ENCODE measurements at regions of chr3 and their contacts with region 1.

Region 1: GRCh38 chr3:102129760-102130608 is 280.7 kb downstream of the NFKBIZ start:
- DNase-seq: peak; percentile 90
- H3K4me3 ChIP-seq: no peak overlapping the region
- H3K27ac ChIP-seq: peak overlapping the region; percentile 81 to 92 (median 84)
- H3K4me1 ChIP-seq: peaks cover 0 to 33% (median 23%) of the 10 kb centered on the region in 4 donors
- H3K27me3 ChIP-seq: no peaks in the 10 kb centered on the region
- CTCF ChIP-seq: no peak
- EP300 ChIP-seq: peak; percentile 97 to 99 (median 98)
- POLR2A ChIP-seq: no peak

Region 2: GRCh38 chr3:101501783-101502182 is 628.2 kb before region 1 on chr3:
- intact Hi-C with region 1: no loop called
- DNase-seq: no peak
- H3K4me3 ChIP-seq: no peak overlapping the region
- H3K27ac ChIP-seq: no peak overlapping the region
- H3K4me1 ChIP-seq: peaks cover 0 to 8% (median 0%) of the 10 kb centered on the region in 4 donors
- H3K27me3 ChIP-seq: no peaks in the 10 kb centered on the region
- CTCF ChIP-seq: no peak
- EP300 ChIP-seq: no peak
- POLR2A ChIP-seq: no peak

Region 3: DNA sequence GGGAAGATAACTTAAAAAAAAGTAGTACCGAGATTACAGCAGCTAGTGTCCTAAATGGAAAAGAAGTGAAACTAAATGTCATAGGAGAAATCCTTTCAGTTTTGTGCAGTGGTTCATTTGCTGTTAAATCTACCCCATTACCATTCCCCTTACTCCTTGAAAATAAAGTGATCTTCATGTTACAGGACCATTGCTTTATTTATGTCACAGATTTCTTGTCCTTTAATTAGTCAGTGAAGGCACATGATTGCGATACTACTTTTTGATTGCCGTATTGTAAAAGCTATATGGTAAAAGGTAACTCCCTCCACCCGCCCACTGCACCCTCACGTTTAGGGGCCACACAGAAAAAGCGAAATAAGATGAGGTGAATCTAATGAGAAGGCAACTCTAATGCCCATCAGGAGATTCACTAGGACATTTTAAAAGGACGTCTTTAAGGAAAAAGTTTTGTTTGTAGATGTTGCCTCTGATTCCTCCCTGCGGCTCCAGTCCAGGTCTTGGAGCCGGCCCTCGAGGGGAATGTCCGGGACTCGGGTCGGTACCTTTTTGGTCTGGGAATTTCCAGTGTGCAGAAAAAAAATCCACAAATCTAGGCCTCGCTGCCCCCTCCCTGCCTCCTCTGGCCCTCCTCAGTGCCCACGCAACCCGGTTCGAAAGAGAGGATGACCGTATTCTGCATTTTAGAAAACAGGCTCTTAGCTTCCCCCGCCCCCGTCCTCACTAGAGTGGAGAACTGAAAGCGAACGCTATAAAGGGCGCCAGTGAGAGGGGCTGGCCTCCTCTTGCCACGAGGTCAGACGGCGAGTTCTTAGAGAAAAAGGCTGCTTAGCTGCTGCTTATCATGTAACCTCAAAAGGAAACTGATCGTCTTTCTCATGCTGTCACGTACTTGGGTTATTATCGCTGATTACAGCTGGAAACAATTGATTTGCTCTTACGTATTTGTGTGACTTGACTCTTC is 302.5 kb before region 1 on chr3:
- intact Hi-C with region 1: loop called (anchors 5 kb)
- DNase-seq: peak; percentile 90
- H3K4me3 ChIP-seq: peak overlapping the region; percentile 44 to 63 (median 58)
- H3K27ac ChIP-seq: peak overlapping the region; percentile 85 to 93 (median 92)
- H3K4me1 ChIP-seq: peaks cover 0 to 39% (median 34%) of the 10 kb centered on the region in 4 donors
- H3K27me3 ChIP-seq: no peaks in the 10 kb centered on the region
- CTCF ChIP-seq: no peak
- EP300 ChIP-seq: no peak
- POLR2A ChIP-seq: peak; percentile 48 to 49

Region 4: DNA sequence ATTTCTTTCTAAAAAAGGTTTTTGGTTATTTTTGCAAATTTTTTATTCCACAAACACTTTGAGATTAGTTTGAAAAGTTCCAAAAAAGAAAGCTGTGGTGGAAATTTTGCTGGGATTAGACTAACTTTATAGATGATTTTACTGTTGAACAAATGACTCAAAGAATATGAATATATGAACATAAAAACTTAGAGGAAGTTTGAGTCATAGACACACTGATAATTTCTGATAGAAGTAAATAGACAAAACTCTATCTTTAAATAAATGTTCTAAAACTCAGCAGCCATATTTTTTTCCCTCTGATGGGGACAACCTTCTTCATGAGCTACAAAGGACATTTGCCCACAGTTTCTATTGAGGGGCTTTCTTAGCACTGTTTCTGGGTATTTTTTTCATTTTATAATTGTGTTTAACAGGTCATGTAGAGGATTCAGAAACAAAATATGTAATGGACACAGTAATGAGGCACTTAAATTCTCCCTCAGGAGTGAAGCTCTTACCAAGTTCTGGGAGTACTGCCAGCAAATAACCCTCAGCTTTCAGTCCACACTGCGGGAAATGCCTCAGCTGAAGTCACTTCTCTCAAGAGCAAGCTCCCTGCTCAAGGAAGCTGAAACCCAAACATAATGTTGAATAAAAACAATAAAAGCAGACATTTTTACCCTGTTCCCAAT is 123.0 kb before region 1 on chr3:
- intact Hi-C with region 1: loop called (anchors 10 kb)
- DNase-seq: peak; percentile 74
- H3K4me3 ChIP-seq: no peak overlapping the region
- H3K27ac ChIP-seq: peak overlapping the region in 2 of 4 donors; percentile 28 to 56
- H3K4me1 ChIP-seq: peaks cover 0 to 10% (median 7%) of the 10 kb centered on the region in 4 donors
- H3K27me3 ChIP-seq: no peaks in the 10 kb centered on the region
- CTCF ChIP-seq: no peak
- EP300 ChIP-seq: peak in 1 of 4 donors; percentile 10
- POLR2A ChIP-seq: no peak

Region 5: GRCh38 chr3:102084006-102084405 is 46.0 kb before region 1 on chr3:
- intact Hi-C with region 1: loop called (anchors 5 kb)
- DNase-seq: no peak
- H3K4me3 ChIP-seq: no peak overlapping the region
- H3K27ac ChIP-seq: peak overlapping the region in 1 of 4 donors; percentile 7
- H3K4me1 ChIP-seq: peaks cover 0 to 40% (median 24%) of the 10 kb centered on the region in 4 donors
- H3K27me3 ChIP-seq: no peaks in the 10 kb centered on the region
- CTCF ChIP-seq: no peak
- EP300 ChIP-seq: no peak
- POLR2A ChIP-seq: no peak

Region 6: DNA sequence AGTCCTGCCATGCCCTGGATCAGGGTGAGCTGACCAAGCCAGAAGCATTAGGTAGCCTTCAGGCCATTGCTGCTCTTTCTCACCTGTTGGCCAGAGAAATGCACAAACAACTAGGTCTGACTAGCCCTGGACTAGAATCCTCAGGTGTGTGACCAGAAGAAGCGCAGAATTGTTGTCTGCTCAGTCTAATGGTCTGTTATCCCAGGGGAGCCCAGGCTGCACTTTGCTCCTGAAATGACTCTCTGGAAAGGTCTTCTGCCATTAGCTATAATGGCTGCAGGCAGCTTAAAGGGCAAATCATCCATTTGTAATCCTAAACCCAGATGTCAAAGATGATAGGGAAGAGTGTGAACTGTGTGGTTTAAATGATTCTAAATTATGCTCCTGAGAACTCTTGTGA is 34.6 kb before region 1 on chr3:
- intact Hi-C with region 1: no loop called
- DNase-seq: no peak
- H3K4me3 ChIP-seq: no peak overlapping the region
- H3K27ac ChIP-seq: no peak overlapping the region
- H3K4me1 ChIP-seq: peaks cover 0 to 11% (median 8%) of the 10 kb centered on the region in 4 donors
- H3K27me3 ChIP-seq: no peaks in the 10 kb centered on the region
- CTCF ChIP-seq: no peak
- EP300 ChIP-seq: no peak
- POLR2A ChIP-seq: no peak

Region 7: DNA sequence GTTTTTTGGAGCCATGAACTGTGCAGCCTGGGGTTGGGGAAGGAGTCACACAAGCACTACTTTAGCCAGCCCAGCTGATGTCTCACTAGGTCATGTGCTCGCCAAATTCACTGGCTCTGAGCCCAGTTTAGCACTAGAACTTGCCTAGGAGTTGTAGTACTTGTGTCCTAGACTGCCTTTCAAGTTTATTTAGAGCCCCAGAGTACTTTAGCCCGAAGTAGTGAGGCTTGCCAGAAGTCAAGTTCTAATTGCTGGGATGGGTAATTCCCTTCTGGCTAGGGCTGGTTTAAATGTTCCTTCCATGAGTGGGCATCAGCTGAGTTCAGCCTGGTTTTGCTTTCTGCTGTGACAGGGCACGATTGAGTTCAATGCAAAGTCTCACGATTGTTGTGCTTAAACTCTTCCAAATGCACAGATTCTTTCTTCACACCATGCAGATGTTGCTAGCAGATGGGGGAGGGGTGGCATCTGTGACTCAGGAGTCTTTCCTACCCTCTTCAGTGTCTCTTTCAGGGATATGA is 76.6 kb after region 1 on chr3:
- intact Hi-C with region 1: loop called (anchors 2 kb)
- DNase-seq: peak; percentile 96
- H3K4me3 ChIP-seq: no peak overlapping the region
- H3K27ac ChIP-seq: peak overlapping the region; percentile 39 to 73 (median 62)
- H3K4me1 ChIP-seq: peaks cover 0 to 22% (median 18%) of the 10 kb centered on the region in 4 donors
- H3K27me3 ChIP-seq: no peaks in the 10 kb centered on the region
- CTCF ChIP-seq: no peak
- EP300 ChIP-seq: peak in 3 of 4 donors; percentile 39 to 76 (median 40)
- POLR2A ChIP-seq: no peak

Measured in sigmoid colon (tissue), 7 donors.